Psoas muscle (tissue), 8 donors: ENCODE measurements at regions of chr2 and their contacts with region 1.

Region 1: GRCh38 chr2:172131713-172132555 is 29.2 kb upstream of the DLX2 start:
- DNase-seq: no peak
- ATAC-seq: no peak
- H3K4me3 ChIP-seq: no peak overlapping the region
- H3K27ac ChIP-seq: no peak overlapping the region
- H3K4me1 ChIP-seq: no peaks in the 10 kb centered on the region
- H3K27me3 ChIP-seq: peaks cover 0 to 4% (median 0%) of the 10 kb centered on the region in 3 donors
- CTCF ChIP-seq: no peak

Region 2: DNA sequence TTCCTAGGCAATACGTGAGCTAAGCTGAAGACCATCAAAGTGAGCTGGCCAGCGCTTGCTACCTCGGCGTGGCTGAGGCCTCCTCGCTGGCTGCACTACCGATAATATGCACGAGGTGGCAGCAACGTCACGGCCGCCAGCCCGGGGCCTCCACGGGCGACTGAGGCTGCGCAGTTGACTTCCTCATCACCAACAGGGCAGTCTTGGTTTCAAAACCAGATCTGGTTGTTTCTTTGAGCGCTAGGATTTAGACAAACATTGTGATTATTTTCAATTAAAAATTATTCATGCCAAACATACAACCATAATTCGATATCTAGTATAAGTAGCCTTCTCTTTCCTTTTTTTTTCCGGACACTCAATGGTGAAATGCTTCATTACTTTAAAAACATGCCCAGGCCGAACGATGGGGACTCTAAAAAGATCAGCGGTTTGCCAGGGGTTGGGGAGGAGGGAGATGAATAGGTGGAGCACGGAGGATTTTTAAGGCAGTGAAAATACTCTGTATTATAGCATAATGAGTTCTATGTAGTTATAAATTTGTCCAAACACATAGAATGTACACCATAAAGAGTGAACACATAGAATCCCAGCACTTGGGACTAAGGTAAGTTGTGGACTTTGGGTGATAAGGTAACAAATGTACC is 557.7 kb before region 1 on chr2:
- intact Hi-C with region 1: loop called in 1 of 2 experiments (anchors 10 kb)
- DNase-seq: peak; percentile 74 to 88
- ATAC-seq: peak; percentile 67 to 90 (median 81)
- H3K4me3 ChIP-seq: no peak overlapping the region
- H3K27ac ChIP-seq: no peak overlapping the region
- H3K4me1 ChIP-seq: no peaks in the 10 kb centered on the region
- H3K27me3 ChIP-seq: no peaks in the 10 kb centered on the region
- CTCF ChIP-seq: peak; percentile 93

Region 3: DNA sequence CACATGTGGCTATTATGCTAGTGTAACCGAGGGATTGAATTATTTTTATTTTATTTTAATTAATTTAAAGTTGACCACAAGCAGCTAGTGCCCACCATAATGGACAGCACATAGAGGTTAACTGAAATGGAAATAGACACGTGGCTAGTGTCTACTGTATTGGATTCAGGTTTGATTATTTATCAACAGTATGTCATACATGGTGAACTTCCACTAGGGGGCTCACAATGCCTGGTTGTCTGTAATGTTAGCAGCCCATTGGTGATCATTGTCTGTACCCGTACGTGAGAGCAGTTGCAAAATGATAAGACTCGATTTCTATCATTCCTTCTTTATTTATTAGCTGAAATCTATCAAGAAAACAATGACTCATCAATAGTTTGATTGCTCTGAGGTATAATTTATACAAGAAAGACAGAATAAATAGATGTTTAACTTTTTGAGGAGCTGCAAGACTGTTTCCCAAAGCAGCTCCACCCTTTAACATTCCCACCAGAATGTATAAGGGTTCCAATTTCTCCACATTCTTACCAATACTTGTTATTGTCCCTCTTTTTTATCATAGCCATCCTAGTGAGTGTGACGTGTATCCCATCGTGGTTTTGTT is 533.1 kb before region 1 on chr2:
- intact Hi-C with region 1: loop called in 1 of 2 experiments (anchors 10 kb)
- DNase-seq: no peak
- ATAC-seq: peak; percentile 37 to 84 (median 72)
- H3K4me3 ChIP-seq: no peak overlapping the region
- H3K27ac ChIP-seq: no peak overlapping the region
- H3K4me1 ChIP-seq: no peaks in the 10 kb centered on the region
- H3K27me3 ChIP-seq: no peaks in the 10 kb centered on the region
- CTCF ChIP-seq: peak; percentile 74